ENCODE measurements at regions of chr14 and their contacts with region 1.

Region 1: DNA sequence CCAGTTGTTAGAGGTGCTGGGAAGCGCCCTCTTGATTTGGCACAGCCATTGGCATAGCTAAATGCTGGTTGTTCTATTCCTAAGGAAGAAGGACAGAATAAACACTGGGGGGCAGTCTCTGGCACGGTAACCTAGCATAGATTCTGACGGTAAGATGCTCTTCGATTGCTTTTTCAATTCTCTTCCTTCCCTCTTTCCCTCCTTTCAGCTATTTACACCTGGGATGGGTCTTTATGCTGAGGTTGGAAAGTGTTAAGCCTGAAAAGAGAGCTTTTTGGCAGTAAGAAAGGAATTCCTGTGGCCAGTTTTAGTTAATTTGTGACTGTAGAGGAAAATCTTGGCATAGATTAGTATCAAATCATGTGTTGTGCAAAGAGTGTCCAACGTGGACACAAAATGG is 162.8 kb downstream of the SNAPC1 start:
- DNase-seq: peak; percentile 16
- H3K4me3 ChIP-seq: no peak overlapping the region
- H3K27ac ChIP-seq: no peak overlapping the region
- H3K4me1 ChIP-seq: peaks cover 28% of the 10 kb centered on the region
- H3K27me3 ChIP-seq: peaks cover 2% of the 10 kb centered on the region
- CTCF ChIP-seq: peak; percentile 24 to 56

Region 2: DNA sequence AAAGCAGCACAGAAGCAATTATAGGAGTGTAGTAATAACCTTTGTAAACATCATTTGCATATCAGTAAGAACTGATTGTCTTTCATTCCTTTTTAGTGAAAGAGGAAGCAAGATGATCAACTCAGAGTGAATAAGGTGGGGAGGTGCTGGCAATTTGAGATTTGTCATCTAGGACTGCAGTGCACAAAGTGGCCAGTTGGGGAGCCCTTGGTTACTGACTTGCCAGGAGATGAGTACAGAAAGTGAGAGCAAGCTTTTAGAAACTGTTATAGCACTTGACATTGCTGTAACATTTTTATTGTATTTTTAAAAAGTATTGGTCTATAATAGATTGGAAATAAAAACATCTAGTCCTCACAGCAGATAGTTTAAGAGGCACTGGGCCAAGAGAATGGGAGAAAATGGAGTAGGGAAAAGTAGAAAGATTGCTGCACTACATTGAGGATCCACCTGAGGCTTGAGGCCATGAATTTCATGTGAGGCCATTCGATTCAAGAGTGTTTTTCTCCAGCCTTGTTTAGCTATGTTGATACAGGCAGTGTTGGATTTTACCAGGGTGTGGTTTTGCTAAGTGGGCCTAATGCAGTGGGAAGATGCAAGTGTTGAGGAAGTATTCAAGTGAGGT is 64.6 kb before region 1 on chr14:
- CTCF ChIA-PET with region 1: no interaction called
- dilution Hi-C with region 1: no loop called
- in situ Hi-C with region 1: no loop called
- intact Hi-C with region 1: loop called (anchors 2 kb)
- DNase-seq: peak; percentile 35
- H3K4me3 ChIP-seq: no peak overlapping the region
- H3K27ac ChIP-seq: no peak overlapping the region
- H3K4me1 ChIP-seq: no peaks in the 10 kb centered on the region
- H3K27me3 ChIP-seq: no peaks in the 10 kb centered on the region
- CTCF ChIP-seq: peak; percentile 86 to 94

Region 3: DNA sequence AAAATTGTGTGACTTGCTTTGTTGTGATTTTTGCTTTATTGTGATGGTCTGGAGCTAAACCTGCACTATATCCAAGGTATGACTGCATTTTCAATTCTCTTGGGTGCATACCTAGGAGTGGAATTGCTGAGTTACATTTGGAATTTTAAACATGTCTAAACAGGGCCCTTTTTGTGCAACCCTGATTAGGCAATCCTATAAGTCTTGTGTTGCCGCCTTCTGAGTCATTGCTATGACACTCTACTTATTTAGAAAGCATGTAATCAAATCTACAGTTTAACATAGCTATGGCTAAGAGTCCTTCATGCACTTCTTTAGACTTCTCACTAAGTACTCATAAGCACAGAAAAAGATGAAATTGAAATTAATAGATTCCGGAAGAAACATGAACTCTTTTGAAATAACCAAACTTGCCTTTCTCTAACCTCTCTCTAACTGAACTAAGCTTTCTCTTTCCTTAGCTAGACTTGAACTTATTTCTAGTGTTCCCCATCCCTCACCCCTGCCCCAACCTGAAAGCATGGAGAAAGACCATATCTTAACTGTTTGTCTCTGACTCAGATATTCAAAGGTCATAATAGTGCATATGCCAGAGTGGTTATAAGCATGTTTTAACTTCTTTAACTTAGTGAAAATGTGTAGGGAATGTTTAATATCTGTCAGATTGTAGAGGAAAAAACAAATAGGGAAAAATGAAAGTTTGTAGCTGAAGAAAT is 40.1 kb after region 1 on chr14:
- CTCF ChIA-PET with region 1: no interaction called
- dilution Hi-C with region 1: no loop called
- in situ Hi-C with region 1: no loop called
- intact Hi-C with region 1: loop called (anchors 1 kb)
- DNase-seq: peak; percentile 94
- H3K4me3 ChIP-seq: no peak overlapping the region
- H3K27ac ChIP-seq: peak overlapping the region; percentile 50
- H3K4me1 ChIP-seq: peaks cover 11% of the 10 kb centered on the region
- H3K27me3 ChIP-seq: no peaks in the 10 kb centered on the region
- CTCF ChIP-seq: no peak

Region 4: DNA sequence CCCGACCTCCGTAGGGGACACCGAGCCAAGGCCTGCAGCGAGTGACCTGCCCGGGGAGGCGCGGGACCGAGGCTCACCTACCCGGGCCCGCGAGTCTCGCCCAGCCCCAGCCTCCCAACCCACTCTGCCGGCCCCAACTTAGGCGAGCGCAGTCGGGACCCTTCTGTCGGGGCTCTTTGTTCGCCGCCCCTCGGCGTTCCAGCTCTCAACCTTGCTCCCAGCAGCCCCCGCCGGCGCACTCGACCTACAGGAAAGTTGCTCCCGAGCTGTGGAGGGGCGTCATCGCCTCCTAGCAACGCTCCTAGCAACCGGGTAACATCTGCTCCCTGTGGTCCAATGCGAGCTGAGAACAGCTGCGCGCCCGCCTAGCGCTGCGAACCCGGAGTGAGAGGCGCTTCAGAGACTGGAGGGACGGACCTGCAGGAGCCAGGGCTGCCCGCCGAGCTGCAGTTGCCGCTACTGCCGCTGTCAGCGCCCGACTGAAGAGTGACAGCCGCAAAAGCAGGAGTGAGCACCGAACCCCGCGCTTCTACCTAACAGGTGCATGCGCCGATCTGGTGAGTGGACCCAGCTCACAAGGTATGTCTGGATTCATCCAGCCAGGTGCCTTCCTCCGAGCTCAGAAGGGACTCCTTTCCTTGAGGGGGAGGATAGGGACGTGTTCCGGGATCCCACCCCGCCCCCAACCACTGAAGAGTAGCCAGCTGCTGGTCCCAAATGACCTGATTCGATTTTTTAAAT is 192.1 kb after region 1 on chr14:
- CTCF ChIA-PET with region 1: no interaction called
- dilution Hi-C with region 1: no loop called
- in situ Hi-C with region 1: loop called in 1 of 2 experiments (anchors 10 kb)
- intact Hi-C with region 1: loop called (anchors 2 kb)
- DNase-seq: peak; percentile 40
- H3K4me3 ChIP-seq: peak overlapping the region in 2 of 3 experiments; percentile 4 to 15
- H3K27ac ChIP-seq: no peak overlapping the region
- H3K4me1 ChIP-seq: no peaks in the 10 kb centered on the region
- H3K27me3 ChIP-seq: peaks cover 22% of the 10 kb centered on the region
- CTCF ChIP-seq: peak; percentile 9 to 43

Region 5: GRCh38 chr14:63276492-63277342 is 1351.7 kb after region 1 on chr14:
- CTCF ChIA-PET with region 1: no interaction called
- dilution Hi-C with region 1: no loop called
- in situ Hi-C with region 1: no loop called
- intact Hi-C with region 1: loop called (anchors 10 kb)
- DNase-seq: peak; percentile 65
- H3K4me3 ChIP-seq: no peak overlapping the region
- H3K27ac ChIP-seq: no peak overlapping the region
- H3K4me1 ChIP-seq: no peaks in the 10 kb centered on the region
- H3K27me3 ChIP-seq: no peaks in the 10 kb centered on the region
- CTCF ChIP-seq: peak; percentile 75 to 86

Measured in mammary epithelial cell (primary cell).